ENCODE measurements at regions of chr4 and their contacts with region 1.

Region 1: GRCh38 chr4:170589597-170590191 is 499.9 kb upstream of the AADAT start:
- DNase-seq: peak; percentile 61
- H3K4me3 Mint-ChIP-seq: no peak overlapping the region
- H3K27ac Mint-ChIP-seq: no peak overlapping the region
- H3K4me1 Mint-ChIP-seq: no peaks in the 10 kb centered on the region
- H3K27me3 Mint-ChIP-seq: no peaks in the 10 kb centered on the region
- CTCF ChIP-seq: peak; percentile 34

Region 2: GRCh38 chr4:170853422-170854021 is 263.8 kb after region 1 on chr4:
- CTCF ChIA-PET with region 1: interaction called, 110 read pairs
- POLR2A ChIA-PET with region 1: interaction called, 3 read pairs
- intact Hi-C with region 1: loop called (anchors 1 kb)
- DNase-seq: peak; percentile 64
- H3K4me3 Mint-ChIP-seq: no peak overlapping the region
- H3K27ac Mint-ChIP-seq: no peak overlapping the region
- H3K4me1 Mint-ChIP-seq: peaks cover 6% of the 10 kb centered on the region
- H3K27me3 Mint-ChIP-seq: no peaks in the 10 kb centered on the region
- CTCF ChIP-seq: peak; percentile 68

Region 3: DNA sequence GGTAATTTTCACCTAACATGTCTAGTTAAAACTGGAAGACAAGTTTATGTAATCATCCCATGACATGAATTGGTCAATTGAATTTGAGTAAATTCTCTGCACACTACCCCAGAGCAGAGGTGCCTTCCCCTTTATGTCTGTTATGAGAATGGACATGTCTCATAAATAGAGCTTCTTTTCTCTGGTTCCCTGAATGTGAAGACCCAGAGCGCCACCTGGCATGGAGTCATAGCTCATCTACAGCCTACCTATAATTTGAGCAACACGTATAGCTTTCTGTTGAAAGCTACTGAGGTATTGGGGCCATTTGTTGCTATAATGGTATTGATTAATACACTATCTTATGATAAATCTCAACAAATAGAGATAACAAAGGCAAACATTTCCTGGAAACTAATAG is 597.0 kb after region 1 on chr4:
- CTCF ChIA-PET with region 1: interaction called, 5 read pairs
- POLR2A ChIA-PET with region 1: interaction called, 3 read pairs
- intact Hi-C with region 1: loop called (anchors 5 kb)
- DNase-seq: peak; percentile 21
- H3K4me3 Mint-ChIP-seq: no peak overlapping the region
- H3K27ac Mint-ChIP-seq: no peak overlapping the region
- H3K4me1 Mint-ChIP-seq: no peaks in the 10 kb centered on the region
- H3K27me3 Mint-ChIP-seq: no peaks in the 10 kb centered on the region
- CTCF ChIP-seq: no peak

Region 4: GRCh38 chr4:171256223-171256622 is 666.5 kb after region 1 on chr4:
- CTCF ChIA-PET with region 1: no interaction called
- POLR2A ChIA-PET with region 1: no interaction called
- intact Hi-C with region 1: no loop called
- DNase-seq: no peak
- H3K4me3 Mint-ChIP-seq: no peak overlapping the region
- H3K27ac Mint-ChIP-seq: no peak overlapping the region
- H3K4me1 Mint-ChIP-seq: no peaks in the 10 kb centered on the region
- H3K27me3 Mint-ChIP-seq: peaks cover 60% of the 10 kb centered on the region
- CTCF ChIP-seq: no peak

Region 5: DNA sequence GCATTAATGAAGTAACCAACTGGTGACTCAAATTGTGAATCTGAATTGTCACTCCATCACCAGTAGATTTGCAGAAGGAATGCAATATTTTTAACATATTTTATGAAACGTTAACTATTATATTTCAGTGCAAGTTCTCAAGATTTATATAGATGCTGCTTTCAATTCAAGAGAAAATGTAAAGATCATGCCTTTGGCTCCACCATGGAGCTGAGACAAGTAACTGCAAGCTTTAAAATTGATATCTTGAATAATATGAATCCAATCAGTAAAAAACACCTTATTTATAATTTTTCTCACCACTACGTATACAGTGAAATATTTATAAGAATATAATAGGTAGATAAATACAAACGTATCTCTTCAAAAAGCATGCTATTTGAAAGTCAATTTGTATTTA is 1195.7 kb after region 1 on chr4:
- CTCF ChIA-PET with region 1: interaction called, 3 read pairs
- POLR2A ChIA-PET with region 1: no interaction called
- intact Hi-C with region 1: loop called (anchors 10 kb)
- DNase-seq: no peak
- H3K4me3 Mint-ChIP-seq: no peak overlapping the region
- H3K27ac Mint-ChIP-seq: no peak overlapping the region
- H3K4me1 Mint-ChIP-seq: no peaks in the 10 kb centered on the region
- H3K27me3 Mint-ChIP-seq: peaks cover 49% of the 10 kb centered on the region
- CTCF ChIP-seq: no peak

Region 6: DNA sequence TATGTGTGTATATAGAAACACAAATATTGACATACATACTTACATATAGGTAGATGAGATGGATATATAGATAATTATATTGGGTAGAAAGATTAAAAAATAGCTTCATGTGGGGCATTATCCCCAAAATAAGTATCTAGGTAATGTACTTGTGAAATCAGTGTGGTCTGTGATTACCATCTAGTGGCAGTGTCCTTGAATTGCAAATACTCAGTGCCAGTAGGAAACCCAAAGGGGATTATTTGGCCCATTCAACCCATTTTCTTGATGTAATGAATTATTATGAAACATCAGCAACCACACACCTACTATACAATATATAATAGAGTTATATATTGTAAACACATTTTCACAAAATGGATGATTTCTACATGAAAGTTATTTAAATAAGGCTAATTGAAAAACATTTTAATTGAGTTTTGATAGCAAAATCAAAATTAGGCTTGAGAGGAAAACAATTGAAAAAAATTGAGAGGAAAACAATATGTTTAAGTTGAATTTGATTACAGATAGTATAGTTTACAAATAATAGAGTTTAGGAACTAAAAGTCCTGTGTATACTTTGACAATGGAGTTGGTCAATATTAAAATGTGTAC is 1612.9 kb after region 1 on chr4:
- CTCF ChIA-PET with region 1: interaction called, 4 read pairs
- POLR2A ChIA-PET with region 1: no interaction called
- intact Hi-C with region 1: loop called (anchors 5 kb)
- DNase-seq: peak; percentile 38
- H3K4me3 Mint-ChIP-seq: no peak overlapping the region
- H3K27ac Mint-ChIP-seq: no peak overlapping the region
- H3K4me1 Mint-ChIP-seq: no peaks in the 10 kb centered on the region
- H3K27me3 Mint-ChIP-seq: peaks cover 50% of the 10 kb centered on the region
- CTCF ChIP-seq: peak; percentile 74

Measured in MCF 10A (cell line).